Mammary epithelial cell (primary cell): ENCODE measurements at regions of chr21 and their contacts with region 1.

Region 1: DNA sequence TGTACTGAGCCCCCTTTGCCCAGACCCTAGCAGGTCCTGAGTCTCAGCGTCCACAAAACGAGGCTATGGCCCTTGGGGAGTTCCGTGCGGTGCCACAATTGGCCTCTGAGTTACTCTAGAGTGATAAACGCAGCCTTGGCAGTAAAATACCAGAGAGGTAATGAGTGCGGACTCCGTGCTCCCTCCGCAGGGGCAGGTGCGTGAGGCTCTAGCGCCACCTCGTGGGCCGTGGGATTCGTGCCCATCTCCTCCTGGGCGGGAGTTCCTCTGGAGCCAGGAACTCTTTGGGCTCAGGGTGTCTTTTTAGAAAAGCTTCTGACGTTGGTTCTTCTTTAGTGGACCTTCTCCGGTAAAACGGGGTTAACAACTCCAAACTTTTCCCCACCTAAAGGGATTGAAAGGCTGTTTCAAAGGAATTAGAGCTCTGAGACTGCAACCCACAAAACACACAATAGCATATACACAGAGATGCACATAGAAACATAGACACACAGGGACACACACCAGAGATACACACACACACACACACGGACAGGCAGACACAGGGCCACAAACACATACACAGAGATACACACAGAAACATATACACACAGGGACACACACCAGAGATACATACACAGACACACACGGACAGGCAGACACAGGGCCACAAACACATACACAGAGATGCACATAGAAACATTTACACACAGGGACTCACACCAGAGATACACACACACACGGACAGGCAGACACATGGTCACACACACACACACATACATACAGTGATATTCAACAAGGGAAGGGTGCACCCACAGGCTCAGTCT is 99.4 kb downstream of the KCNJ15 start:
- DNase-seq: peak; percentile 64
- H3K4me3 ChIP-seq: no peak overlapping the region
- H3K27ac ChIP-seq: no peak overlapping the region
- H3K4me1 ChIP-seq: peaks cover 10% of the 10 kb centered on the region
- H3K27me3 ChIP-seq: no peaks in the 10 kb centered on the region
- CTCF ChIP-seq: peak; percentile 90 to 99

Region 2: DNA sequence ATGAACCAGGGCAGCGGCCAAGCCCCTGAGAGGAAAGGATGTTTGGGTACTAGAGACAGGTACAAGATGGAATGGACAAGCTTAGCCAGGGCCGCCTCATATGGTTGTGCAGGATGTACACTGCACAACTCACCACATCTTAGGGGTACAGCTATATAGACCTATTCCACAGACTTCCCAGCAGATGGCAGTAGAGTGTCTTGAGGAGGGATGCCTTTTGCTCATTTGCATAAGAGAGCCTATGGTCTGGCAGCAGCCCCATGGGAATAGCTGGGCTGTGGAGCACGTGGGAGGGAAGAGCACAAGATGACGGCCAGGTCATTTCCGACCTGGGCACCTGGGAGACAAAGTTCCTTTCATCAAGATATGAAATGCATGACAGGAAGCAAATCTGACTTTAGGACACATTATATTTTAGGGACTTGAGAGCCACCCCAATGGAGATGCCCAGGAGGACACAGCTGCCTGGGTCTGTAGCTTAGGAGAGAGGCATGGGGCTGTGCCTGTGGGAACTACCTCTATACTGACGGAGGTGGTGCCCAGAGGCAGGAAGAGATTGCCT is 655.5 kb before region 1 on chr21:
- CTCF ChIA-PET with region 1: no interaction called
- dilution Hi-C with region 1: no loop called
- in situ Hi-C with region 1: loop called in 1 of 2 experiments (anchors 25 kb)
- intact Hi-C with region 1: no loop called
- DNase-seq: peak; percentile 73
- H3K4me3 ChIP-seq: no peak overlapping the region
- H3K27ac ChIP-seq: no peak overlapping the region
- H3K4me1 ChIP-seq: no peaks in the 10 kb centered on the region
- H3K27me3 ChIP-seq: no peaks in the 10 kb centered on the region
- CTCF ChIP-seq: peak; percentile 68 to 74

Region 3: GRCh38 chr21:37916310-37917051 is 439.7 kb before region 1 on chr21 and contains the start of gene KCNJ6:
- CTCF ChIA-PET with region 1: interaction called, 4 read pairs
- dilution Hi-C with region 1: no loop called
- in situ Hi-C with region 1: no loop called
- intact Hi-C with region 1: loop called (anchors 1 kb)
- DNase-seq: peak; percentile 37
- H3K4me3 ChIP-seq: no peak within 1 kb of the TSS
- H3K27ac ChIP-seq: no peak within 1 kb of the TSS
- H3K4me1 ChIP-seq: no peaks in the 10 kb centered on the region
- H3K27me3 ChIP-seq: peaks cover 20% of the 10 kb centered on the region
- CTCF ChIP-seq: peak in 1 of 2 donors; percentile 47
- total RNA-seq, gene KCNJ6: not detected

Region 4: DNA sequence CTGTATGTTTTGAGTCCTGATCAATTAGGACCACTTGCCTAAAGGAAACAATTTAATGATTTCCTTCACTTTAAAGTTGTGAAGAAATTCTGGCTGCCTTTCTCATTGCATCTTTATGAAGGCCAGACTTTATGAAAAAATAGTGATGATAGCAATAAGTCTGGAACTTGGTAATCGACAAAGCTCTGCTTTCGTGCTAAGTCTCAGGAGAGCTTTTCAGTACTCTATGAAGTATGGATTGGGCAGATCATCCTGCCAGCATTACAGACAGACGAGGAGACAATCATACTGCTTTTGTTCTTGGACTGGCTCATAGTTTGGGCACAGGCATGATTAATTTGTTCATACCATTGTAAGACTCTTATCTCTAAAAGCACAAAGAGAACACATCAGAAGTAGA is 144.9 kb before region 1 on chr21:
- CTCF ChIA-PET with region 1: interaction called, 3 read pairs
- dilution Hi-C with region 1: no loop called
- in situ Hi-C with region 1: loop called (anchors 5 kb)
- intact Hi-C with region 1: no loop called
- DNase-seq: no peak
- H3K4me3 ChIP-seq: no peak overlapping the region
- H3K27ac ChIP-seq: no peak overlapping the region
- H3K4me1 ChIP-seq: no peaks in the 10 kb centered on the region
- H3K27me3 ChIP-seq: no peaks in the 10 kb centered on the region
- CTCF ChIP-seq: no peak

Region 5: GRCh38 chr21:38277501-38278131 is 78.6 kb before region 1 on chr21:
- CTCF ChIA-PET with region 1: no interaction called
- dilution Hi-C with region 1: no loop called
- in situ Hi-C with region 1: no loop called
- intact Hi-C with region 1: loop called (anchors 5 kb)
- DNase-seq: peak; percentile 99
- H3K4me3 ChIP-seq: no peak overlapping the region
- H3K27ac ChIP-seq: peak overlapping the region; percentile 91
- H3K4me1 ChIP-seq: peaks cover 37% of the 10 kb centered on the region
- H3K27me3 ChIP-seq: no peaks in the 10 kb centered on the region
- CTCF ChIP-seq: no peak

Region 6: DNA sequence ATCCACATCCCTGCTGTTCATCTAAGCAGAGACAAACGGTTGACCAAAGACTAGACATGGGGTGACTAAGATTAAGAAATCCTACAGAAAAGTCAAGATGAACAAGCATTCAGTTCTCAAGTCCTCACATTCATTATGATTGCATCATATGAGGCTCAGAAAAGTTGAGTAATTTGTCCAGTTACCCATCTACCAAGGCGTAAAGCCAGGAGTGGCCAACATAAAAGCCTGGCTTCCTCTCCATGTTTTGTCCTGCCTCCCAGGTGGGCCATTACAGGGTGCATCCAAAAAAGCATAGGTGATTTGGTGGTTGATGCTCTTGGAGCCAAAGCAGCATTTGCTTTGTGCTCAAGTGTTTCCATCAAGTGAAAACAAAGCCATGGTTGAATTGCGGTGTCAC is 45.6 kb before region 1 on chr21:
- CTCF ChIA-PET with region 1: no interaction called
- dilution Hi-C with region 1: no loop called
- in situ Hi-C with region 1: no loop called
- intact Hi-C with region 1: no loop called
- DNase-seq: peak; percentile 68
- H3K4me3 ChIP-seq: no peak overlapping the region
- H3K27ac ChIP-seq: no peak overlapping the region
- H3K4me1 ChIP-seq: peaks cover 6% of the 10 kb centered on the region
- H3K27me3 ChIP-seq: no peaks in the 10 kb centered on the region
- CTCF ChIP-seq: no peak

Region 7: GRCh38 chr21:38505654-38506515 is 149.7 kb after region 1 on chr21:
- CTCF ChIA-PET with region 1: no interaction called
- dilution Hi-C with region 1: no loop called
- in situ Hi-C with region 1: no loop called
- intact Hi-C with region 1: no loop called
- DNase-seq: peak; percentile 76
- H3K4me3 ChIP-seq: no peak overlapping the region
- H3K27ac ChIP-seq: peak overlapping the region; percentile 5
- H3K4me1 ChIP-seq: peaks cover 20% of the 10 kb centered on the region
- H3K27me3 ChIP-seq: no peaks in the 10 kb centered on the region
- CTCF ChIP-seq: peak; percentile 73 to 78

Region 8: GRCh38 chr21:38688068-38688467 is 331.9 kb after region 1 on chr21:
- CTCF ChIA-PET with region 1: interaction called, 13 read pairs
- dilution Hi-C with region 1: no loop called
- in situ Hi-C with region 1: no loop called
- intact Hi-C with region 1: no loop called
- DNase-seq: no peak
- H3K4me3 ChIP-seq: no peak overlapping the region
- H3K27ac ChIP-seq: no peak overlapping the region
- H3K4me1 ChIP-seq: no peaks in the 10 kb centered on the region
- H3K27me3 ChIP-seq: peaks cover 13% of the 10 kb centered on the region
- CTCF ChIP-seq: no peak